ENCODE measurements at regions of chr11 and their contacts with region 1.

Region 1: DNA sequence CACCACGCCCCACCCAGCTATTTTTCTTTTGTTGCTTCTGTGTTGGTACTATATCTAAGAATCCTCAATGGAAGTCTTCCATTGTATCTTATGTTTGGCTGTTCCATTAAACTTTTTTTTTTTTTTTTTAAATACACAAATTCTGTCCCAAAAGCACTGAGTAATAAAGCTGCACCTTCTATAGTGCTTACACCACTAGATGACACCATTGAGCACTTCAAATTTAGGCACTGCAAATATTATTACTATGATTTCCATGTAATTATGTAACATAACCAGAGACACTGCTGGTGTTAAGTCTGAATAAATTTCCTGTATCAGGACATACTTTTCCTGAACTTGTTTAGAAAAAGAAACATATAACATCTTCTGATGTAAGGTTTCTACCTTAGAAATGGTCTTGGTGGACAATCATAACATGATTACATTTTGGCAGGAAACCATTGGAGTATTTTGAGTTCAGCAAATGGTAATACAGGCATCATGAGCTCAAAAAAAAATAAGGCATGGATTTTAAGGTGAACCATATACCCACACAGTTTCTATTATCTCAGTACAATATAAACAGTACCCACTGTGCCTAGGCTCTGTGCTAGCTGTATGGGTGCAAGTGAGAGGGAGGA is 110.5 kb downstream of the ATG16L2 start:
- DNase-seq: no peak
- ATAC-seq: peak; percentile 59

Region 2: DNA sequence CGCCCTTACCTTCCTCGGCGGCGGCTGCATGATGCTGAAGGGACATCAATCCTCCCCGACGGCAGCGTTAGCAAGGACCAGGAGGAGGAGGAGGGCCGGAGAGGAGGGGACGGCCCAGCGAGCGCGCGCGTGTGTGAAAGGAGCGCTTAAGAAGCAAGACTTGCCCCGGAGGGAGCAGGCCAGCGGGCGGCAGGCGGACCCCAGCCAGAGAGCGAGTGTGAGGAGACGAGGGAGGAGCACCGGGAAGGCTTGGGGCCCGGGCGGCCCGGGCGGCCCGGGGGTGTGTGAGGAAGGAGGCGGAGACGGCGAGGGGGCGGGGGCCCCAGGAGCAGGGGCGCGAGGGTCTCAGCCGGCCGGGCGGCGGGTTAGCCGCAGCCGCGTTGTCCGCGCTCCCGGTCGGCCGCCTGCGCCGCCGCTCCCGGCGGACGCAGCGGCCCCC is 217.2 kb after region 1 on chr11:
- intact Hi-C with region 1: loop called (anchors 10 kb)
- DNase-seq: peak; percentile 89
- ATAC-seq: peak; percentile 49

Measured in Right ventricle myocardium superior (tissue), 1 donor.